MCF 10A (cell line): ENCODE measurements at regions of chr19 and their contacts with region 1.

Region 1: GRCh38 chr19:3047425-3048189 is 14.7 kb downstream of the TLE5 start:
- DNase-seq: peak; percentile 85
- H3K4me3 Mint-ChIP-seq: peak overlapping the region; percentile 77
- H3K27ac Mint-ChIP-seq: peak overlapping the region; percentile 89
- H3K4me1 Mint-ChIP-seq: peaks cover 7% of the 10 kb centered on the region
- H3K27me3 Mint-ChIP-seq: no peaks in the 10 kb centered on the region
- CTCF ChIP-seq: no peak

Region 2: DNA sequence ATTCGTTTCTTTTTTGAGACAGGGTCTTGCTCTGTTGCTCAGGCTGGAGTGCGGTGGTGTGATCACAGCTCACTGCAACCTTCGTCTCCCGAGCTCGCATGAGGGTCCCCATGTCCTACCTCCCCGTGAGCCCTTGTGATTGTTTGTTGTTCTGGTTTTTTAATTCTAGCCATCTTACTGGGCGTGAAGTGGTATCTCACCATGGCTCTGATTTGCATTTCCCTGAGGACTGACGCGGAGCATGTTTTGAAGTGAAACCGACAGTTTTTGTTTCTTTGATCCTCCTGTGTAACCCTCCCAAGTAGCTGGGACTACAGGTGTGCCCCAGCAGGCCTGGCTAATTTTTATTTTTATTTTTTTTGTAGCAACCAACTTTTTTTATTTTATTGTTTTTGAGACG is 366.8 kb before region 1 on chr19:
- CTCF ChIA-PET with region 1: no interaction called
- POLR2A ChIA-PET with region 1: no interaction called
- intact Hi-C with region 1: loop called (anchors 10 kb)
- DNase-seq: no peak
- H3K4me3 Mint-ChIP-seq: no peak overlapping the region
- H3K27ac Mint-ChIP-seq: no peak overlapping the region
- H3K4me1 Mint-ChIP-seq: no peaks in the 10 kb centered on the region
- H3K27me3 Mint-ChIP-seq: peaks cover 46% of the 10 kb centered on the region
- CTCF ChIP-seq: no peak

Region 3: GRCh38 chr19:2739602-2740313 is 307.8 kb before region 1 on chr19 and contains the start of gene SLC39A3:
- CTCF ChIA-PET with region 1: no interaction called
- POLR2A ChIA-PET with region 1: no interaction called
- intact Hi-C with region 1: no loop called
- DNase-seq: peak; percentile 99
- H3K4me3 Mint-ChIP-seq: peak within 1 kb of the TSS; percentile 76
- H3K27ac Mint-ChIP-seq: no peak within 1 kb of the TSS
- H3K4me1 Mint-ChIP-seq: peaks cover 6% of the 10 kb centered on the region
- H3K27me3 Mint-ChIP-seq: peaks cover 18% of the 10 kb centered on the region
- CTCF ChIP-seq: no peak
- total RNA-seq, gene SLC39A3: 21.3 and 29.9 TPM in 2 replicates

Region 4: DNA sequence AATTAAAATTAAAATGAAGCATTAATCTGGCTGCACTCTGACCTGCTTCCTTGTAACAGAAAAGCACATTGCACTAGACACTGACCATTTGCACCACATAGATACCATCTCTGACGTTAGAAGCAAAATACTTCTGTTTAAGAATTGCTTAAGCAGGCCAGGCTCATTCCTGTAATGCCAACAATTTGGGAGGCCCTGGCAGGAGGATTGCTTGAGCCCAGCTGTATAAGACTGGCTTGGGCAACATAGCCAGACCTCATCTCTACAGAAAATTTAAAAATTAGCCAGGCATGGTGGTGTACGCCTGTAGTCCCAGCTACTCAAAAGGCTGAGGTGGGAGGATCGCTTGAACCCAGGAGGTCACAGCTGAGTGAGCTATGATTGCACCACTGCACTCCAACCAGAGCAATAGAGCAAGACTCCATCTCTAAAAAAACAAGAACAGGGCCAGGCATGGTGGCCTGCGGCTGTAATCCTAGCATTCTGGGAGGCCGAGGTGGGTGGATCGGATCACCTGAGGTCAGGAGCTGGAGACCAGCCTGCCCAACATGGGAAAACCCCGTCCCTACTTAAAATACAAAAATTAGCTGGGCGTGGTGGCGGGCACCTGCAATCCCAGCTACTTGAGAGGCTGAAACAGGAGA is 77.3 kb before region 1 on chr19:
- CTCF ChIA-PET with region 1: no interaction called
- POLR2A ChIA-PET with region 1: no interaction called
- intact Hi-C with region 1: no loop called
- DNase-seq: no peak
- H3K4me3 Mint-ChIP-seq: no peak overlapping the region
- H3K27ac Mint-ChIP-seq: no peak overlapping the region
- H3K4me1 Mint-ChIP-seq: no peaks in the 10 kb centered on the region
- H3K27me3 Mint-ChIP-seq: no peaks in the 10 kb centered on the region
- CTCF ChIP-seq: no peak

Region 5: DNA sequence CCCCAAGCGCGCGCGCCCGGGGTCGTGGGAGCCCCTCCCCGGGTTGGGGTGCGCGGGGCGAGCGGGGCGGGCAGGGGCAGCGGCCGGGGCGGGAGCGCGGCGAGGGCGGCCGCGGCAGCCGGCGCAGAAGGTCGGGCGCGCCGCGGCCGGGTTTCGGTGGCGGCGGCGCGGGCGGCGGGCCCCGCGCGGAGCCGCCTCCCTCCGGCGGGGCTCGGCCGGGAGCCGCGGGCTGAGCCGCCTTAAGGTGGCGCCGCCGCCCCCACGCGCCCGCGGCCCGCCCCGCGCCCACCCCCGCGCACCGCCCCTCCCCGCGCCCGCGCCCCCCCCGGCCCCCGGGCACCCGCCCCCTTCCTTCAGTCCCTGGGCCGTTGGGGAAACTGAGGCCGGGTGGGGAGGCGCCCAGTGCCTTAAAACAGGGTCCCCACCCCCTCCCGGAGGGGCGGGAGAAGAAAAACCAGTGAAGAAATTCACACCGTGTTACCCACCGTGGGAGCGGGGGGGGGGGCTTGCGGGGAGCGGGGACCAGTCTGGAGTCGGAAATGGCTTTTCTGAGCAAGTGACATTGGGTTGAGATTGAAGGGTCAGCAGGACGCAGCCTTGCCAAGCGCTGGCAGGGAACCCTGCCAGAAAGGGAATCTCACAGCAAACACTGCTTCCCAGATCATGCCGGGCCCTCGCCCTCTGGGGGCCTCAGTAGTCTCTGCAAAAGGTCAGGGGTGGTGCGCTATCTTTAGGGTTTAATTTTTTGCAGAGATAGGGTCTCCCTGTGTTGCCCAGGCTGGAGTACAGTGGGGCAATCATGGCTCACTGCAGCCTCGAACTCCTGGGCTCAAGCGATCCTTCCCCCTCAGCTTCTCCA is 18.3 kb before region 1 on chr19 and contains the start of gene TLE2:
- CTCF ChIA-PET with region 1: no interaction called
- POLR2A ChIA-PET with region 1: no interaction called
- intact Hi-C with region 1: no loop called
- DNase-seq: no peak
- H3K4me3 Mint-ChIP-seq: peak within 1 kb of the TSS; percentile 67
- H3K27ac Mint-ChIP-seq: no peak within 1 kb of the TSS
- H3K4me1 Mint-ChIP-seq: peaks cover 8% of the 10 kb centered on the region
- H3K27me3 Mint-ChIP-seq: no peaks in the 10 kb centered on the region
- CTCF ChIP-seq: no peak
- total RNA-seq, gene TLE2: 1.9 and 3.0 TPM in 2 replicates